PC-3 (cell line): ENCODE measurements at regions of chr3 and their contacts with region 1.

Region 1: DNA sequence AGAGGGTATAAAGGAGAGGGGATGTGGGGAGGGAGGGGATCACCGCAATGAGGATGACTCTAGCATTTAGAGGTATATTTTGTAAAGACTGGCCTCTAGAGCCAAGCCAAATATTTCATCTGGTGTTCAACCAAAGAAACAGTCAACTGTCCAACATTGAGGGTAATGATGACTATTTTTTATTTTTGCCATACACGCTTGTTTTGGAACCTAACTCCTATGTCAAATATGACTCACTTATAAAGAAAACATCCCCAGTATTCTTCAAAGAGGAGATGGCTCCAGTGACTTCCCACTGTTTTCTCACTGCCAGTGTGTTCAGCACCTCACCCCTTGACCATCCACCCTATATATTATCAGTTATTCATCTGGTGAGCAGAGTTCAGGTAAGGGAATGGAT is 77.3 kb downstream of the WNT5A start:
- DNase-seq: peak; percentile 63
- ATAC-seq: peak; percentile 73
- H3K4me3 ChIP-seq: no peak overlapping the region
- H3K27ac ChIP-seq: peak overlapping the region; percentile 13; the same call in 1 of the 2 replicates
- H3K4me1 ChIP-seq: peaks cover 36% of the 10 kb centered on the region
- H3K27me3 ChIP-seq: no peaks in the 10 kb centered on the region
- CTCF ChIP-seq: no peak

Region 2: GRCh38 chr3:54882129-54882833 is 527.5 kb before region 1 on chr3:
- CTCF ChIA-PET with region 1: no interaction called
- POLR2A ChIA-PET with region 1: no interaction called
- intact Hi-C with region 1: loop called (anchors 5 kb)
- DNase-seq: peak; percentile 95
- ATAC-seq: peak; percentile 90
- H3K4me3 ChIP-seq: no peak overlapping the region
- H3K27ac ChIP-seq: peak overlapping the region; percentile 76
- H3K4me1 ChIP-seq: peaks cover 24% of the 10 kb centered on the region
- H3K27me3 ChIP-seq: no peaks in the 10 kb centered on the region
- CTCF ChIP-seq: no peak

Region 3: GRCh38 chr3:55521738-55522421 is 112.1 kb after region 1 on chr3:
- CTCF ChIA-PET with region 1: no interaction called
- POLR2A ChIA-PET with region 1: no interaction called
- intact Hi-C with region 1: no loop called
- DNase-seq: no peak
- ATAC-seq: no peak
- H3K4me3 ChIP-seq: no peak overlapping the region
- H3K27ac ChIP-seq: no peak overlapping the region
- H3K4me1 ChIP-seq: peaks cover 59% of the 10 kb centered on the region
- H3K27me3 ChIP-seq: no peaks in the 10 kb centered on the region
- CTCF ChIP-seq: no peak